Endothelial cell of umbilical vein (primary cell): ENCODE measurements at regions of chr11 and their contacts with region 1.

Region 1: DNA sequence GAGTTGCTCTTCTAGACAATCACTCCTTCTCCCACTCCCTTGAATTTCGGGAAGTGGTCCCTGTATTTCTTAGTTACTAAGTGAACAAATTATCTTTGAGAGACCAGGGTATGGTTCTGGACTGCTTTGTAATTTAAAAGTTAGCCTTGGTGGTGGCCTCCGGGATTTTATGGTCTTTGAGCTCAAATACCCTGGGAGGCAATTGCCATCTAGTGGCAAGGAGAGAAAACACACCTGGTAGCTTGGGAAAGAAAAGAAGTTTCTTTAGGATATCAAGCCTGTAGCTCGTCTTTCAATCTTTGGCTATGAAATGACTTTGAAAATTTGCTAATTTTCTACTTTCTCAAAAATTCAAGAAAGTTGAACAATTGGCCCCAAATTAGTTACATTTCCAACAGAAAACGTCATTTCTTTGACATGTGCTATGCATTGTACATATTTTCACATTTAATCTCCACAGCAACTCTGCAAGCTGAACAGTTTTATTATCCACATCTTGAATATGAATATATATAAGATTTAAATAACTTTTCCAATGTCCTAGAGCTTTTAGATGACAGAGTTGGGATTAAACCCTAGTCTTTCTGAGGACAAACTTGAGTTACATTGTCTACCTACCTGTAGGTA is 39.1 kb downstream of the MMP27 start:
- DNase-seq: peak; percentile 50
- H3K4me3 ChIP-seq: no peak overlapping the region
- H3K27ac ChIP-seq: no peak overlapping the region
- H3K4me1 ChIP-seq: no peaks in the 10 kb centered on the region
- H3K27me3 ChIP-seq: no peaks in the 10 kb centered on the region
- CTCF ChIP-seq: peak; percentile 64 to 76
- POLR2A ChIP-seq: no peak

Region 2: DNA sequence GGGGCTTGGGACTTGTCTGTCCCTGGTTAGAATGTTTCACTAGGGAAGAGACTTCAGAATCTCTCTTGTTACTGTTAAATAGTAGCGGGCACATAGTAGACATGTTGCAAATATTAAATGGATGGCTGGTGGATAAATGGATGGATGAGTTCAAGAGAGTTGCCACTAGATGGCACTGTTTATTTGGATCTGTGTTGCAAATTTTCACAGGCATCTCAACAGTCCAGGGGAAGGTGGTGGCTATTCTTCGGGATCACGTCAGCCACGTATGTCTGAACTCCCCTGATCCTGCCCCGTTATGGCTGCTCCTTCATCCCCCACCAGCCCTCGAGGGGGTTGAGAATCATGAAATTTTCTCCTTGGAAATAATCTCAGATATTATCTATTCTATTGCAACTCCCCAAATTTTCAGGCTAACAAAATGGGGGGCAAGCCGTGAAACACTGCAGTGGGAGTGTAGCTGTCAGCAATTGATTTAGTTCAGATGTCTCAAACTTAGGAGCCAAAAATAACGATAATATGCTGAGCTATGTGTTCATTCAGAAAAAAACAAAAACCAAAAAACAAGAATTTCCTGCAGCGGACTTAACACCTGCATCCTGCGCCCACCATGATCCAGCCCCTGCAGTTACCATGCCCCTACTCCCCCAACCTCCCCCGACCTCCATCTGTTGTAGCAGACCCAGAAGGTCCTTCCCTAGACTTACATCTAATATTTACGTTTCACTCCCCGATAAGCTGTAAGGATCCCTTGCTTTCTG is 378.3 kb before region 1 on chr11:
- CTCF ChIA-PET with region 1: interaction called, 140 read pairs
- POLR2A ChIA-PET with region 1: no interaction called
- dilution Hi-C with region 1: no loop called
- intact Hi-C with region 1: loop called (anchors 1 kb)
- DNase-seq: peak; percentile 66
- H3K4me3 ChIP-seq: no peak overlapping the region
- H3K27ac ChIP-seq: no peak overlapping the region
- H3K4me1 ChIP-seq: no peaks in the 10 kb centered on the region
- H3K27me3 ChIP-seq: no peaks in the 10 kb centered on the region
- CTCF ChIP-seq: peak; percentile 55 to 65
- POLR2A ChIP-seq: no peak

Region 3: GRCh38 chr11:102390667-102391465 is 275.6 kb before region 1 on chr11:
- CTCF ChIA-PET with region 1: interaction called, 38 read pairs
- POLR2A ChIA-PET with region 1: no interaction called
- dilution Hi-C with region 1: no loop called
- intact Hi-C with region 1: no loop called
- DNase-seq: peak; percentile 63
- H3K4me3 ChIP-seq: no peak overlapping the region
- H3K27ac ChIP-seq: no peak overlapping the region
- H3K4me1 ChIP-seq: peaks cover under 1% of the 10 kb centered on the region
- H3K27me3 ChIP-seq: no peaks in the 10 kb centered on the region
- CTCF ChIP-seq: peak; percentile 83 to 88
- POLR2A ChIP-seq: no peak

Region 4: GRCh38 chr11:102592634-102593581 is 73.5 kb before region 1 on chr11:
- CTCF ChIA-PET with region 1: interaction called, 70 read pairs
- POLR2A ChIA-PET with region 1: no interaction called
- dilution Hi-C with region 1: no loop called
- intact Hi-C with region 1: loop called (anchors 1 kb)
- DNase-seq: peak; percentile 46
- H3K4me3 ChIP-seq: no peak overlapping the region
- H3K27ac ChIP-seq: no peak overlapping the region
- H3K4me1 ChIP-seq: peaks cover under 1% of the 10 kb centered on the region
- H3K27me3 ChIP-seq: no peaks in the 10 kb centered on the region
- CTCF ChIP-seq: peak; percentile 59 to 63
- POLR2A ChIP-seq: no peak

Region 5: DNA sequence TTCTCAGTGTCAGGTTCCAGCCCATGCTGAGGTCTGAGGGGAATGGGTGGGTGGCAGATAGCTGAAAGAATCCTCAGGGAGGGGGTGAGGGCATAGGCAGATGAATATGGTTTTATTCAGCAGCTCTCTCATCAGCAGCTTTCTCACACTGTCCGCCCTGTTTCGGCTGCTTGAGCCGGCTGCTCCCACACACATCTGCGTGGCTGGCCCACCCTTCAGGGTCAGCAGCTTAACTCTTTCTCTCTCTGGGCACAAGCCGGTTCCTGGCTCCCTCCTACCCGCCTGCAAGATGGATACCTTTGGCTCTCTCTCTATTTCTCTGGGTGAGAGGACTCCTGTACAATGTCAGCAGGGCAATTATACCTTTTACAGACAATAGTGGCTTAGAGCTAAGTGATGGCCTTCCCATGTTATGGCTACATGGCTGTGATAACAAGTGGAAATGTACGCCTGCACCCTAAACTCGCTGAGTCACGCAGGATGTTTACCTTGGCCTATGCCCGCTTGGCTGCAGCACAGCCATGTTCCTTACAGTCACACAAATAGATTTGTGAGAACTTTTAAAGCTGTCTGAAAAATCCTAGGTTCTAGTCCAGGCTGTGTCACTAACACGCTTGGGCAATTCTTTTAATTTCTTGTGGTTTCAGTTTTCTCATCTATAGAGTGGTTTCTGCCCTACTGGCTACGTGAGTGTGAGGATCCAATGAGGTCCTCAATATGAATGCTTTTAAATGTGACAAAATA is 45.5 kb before region 1 on chr11:
- CTCF ChIA-PET with region 1: interaction called, 83 read pairs
- POLR2A ChIA-PET with region 1: no interaction called
- dilution Hi-C with region 1: no loop called
- intact Hi-C with region 1: no loop called
- DNase-seq: peak; percentile 77
- H3K4me3 ChIP-seq: no peak overlapping the region
- H3K27ac ChIP-seq: peak overlapping the region; percentile 52
- H3K4me1 ChIP-seq: peaks cover 17% of the 10 kb centered on the region
- H3K27me3 ChIP-seq: no peaks in the 10 kb centered on the region
- CTCF ChIP-seq: no peak
- POLR2A ChIP-seq: no peak

Region 6: GRCh38 chr11:102653744-102654291 is 12.6 kb before region 1 on chr11:
- CTCF ChIA-PET with region 1: interaction called, 22 read pairs
- POLR2A ChIA-PET with region 1: no interaction called
- dilution Hi-C with region 1: no loop called
- intact Hi-C with region 1: no loop called
- DNase-seq: no peak
- H3K4me3 ChIP-seq: no peak overlapping the region
- H3K27ac ChIP-seq: no peak overlapping the region
- H3K4me1 ChIP-seq: no peaks in the 10 kb centered on the region
- H3K27me3 ChIP-seq: peaks cover 4 to 9% of the 10 kb centered on the region in 2 experiments
- CTCF ChIP-seq: no peak
- POLR2A ChIP-seq: no peak